CD8-positive, alpha-beta T cell (primary cell): ENCODE measurements at regions of chr20 and their contacts with region 1.

Region 1: DNA sequence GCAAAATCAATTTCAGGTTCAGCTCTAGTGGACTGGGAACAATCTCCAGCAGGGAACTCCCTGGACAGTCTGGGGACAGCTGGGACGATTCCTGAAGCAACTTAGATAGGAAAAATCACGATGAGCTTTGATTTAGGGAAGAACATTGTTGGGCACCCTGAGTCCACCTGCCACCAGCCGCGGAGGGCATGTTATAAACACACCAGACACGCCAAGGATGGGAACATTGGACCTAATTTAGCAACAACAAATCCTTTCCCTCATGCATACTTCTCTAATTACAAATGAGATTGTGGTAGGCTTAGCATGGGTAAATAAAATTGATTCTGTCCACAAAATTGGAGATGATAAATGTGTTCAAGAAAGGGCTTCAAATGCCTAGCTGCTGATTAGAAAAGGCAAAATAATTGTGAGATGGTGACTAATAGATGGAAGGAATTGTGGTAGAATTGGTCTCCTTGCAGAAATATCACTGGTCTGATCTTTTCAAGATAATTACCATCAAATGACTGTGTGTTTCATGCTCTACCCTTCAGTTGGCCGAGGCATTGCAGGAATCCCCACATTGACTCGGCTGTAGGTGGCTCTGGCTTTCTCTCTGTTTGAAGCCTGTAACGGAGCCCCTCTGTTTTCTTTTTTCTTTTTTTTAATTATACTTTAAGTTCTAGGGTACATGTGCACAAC is 6.1 kb upstream of the NANP start:
- DNase-seq: no peak
- ATAC-seq: no peak
- H3K4me3 ChIP-seq: no peak overlapping the region
- H3K4me3 Mint-ChIP-seq: no peak overlapping the region
- H3K27ac ChIP-seq: no peak overlapping the region
- H3K27ac Mint-ChIP-seq: no peak overlapping the region
- H3K4me1 ChIP-seq: no peaks in the 10 kb centered on the region
- H3K4me1 Mint-ChIP-seq: peaks cover 2% of the 10 kb centered on the region
- H3K27me3 ChIP-seq: no peaks in the 10 kb centered on the region
- H3K27me3 Mint-ChIP-seq: no peaks in the 10 kb centered on the region
- CTCF ChIP-seq: no peak

Region 2: GRCh38 chr20:25676164-25676806 is 46.3 kb after region 1 on chr20:
- CTCF ChIA-PET with region 1: no interaction called
- POLR2A ChIA-PET with region 1: no interaction called
- intact Hi-C with region 1: loop called in 1 of 2 experiments (anchors 1 kb)
- DNase-seq: no peak
- ATAC-seq: no peak
- H3K4me3 ChIP-seq: no peak overlapping the region
- H3K4me3 Mint-ChIP-seq: no peak overlapping the region
- H3K27ac ChIP-seq: no peak overlapping the region
- H3K27ac Mint-ChIP-seq: no peak overlapping the region
- H3K4me1 ChIP-seq: no peaks in the 10 kb centered on the region
- H3K4me1 Mint-ChIP-seq: peaks cover 15% of the 10 kb centered on the region
- H3K27me3 ChIP-seq: no peaks in the 10 kb centered on the region
- H3K27me3 Mint-ChIP-seq: no peaks in the 10 kb centered on the region
- CTCF ChIP-seq: no peak

Region 3: GRCh38 chr20:25685276-25686080 is 55.5 kb after region 1 on chr20:
- CTCF ChIA-PET with region 1: no interaction called
- POLR2A ChIA-PET with region 1: no interaction called
- intact Hi-C with region 1: loop called in 1 of 2 experiments (anchors 2 kb)
- DNase-seq: peak in 1 of 9 experiments; percentile 19
- ATAC-seq: no peak
- H3K4me3 ChIP-seq: no peak overlapping the region
- H3K4me3 Mint-ChIP-seq: no peak overlapping the region
- H3K27ac ChIP-seq: no peak overlapping the region
- H3K27ac Mint-ChIP-seq: no peak overlapping the region
- H3K4me1 ChIP-seq: no peaks in the 10 kb centered on the region
- H3K4me1 Mint-ChIP-seq: peaks cover 26% of the 10 kb centered on the region
- H3K27me3 ChIP-seq: no peaks in the 10 kb centered on the region
- H3K27me3 Mint-ChIP-seq: no peaks in the 10 kb centered on the region
- CTCF ChIP-seq: no peak